Posterior vena cava (tissue), 2 donors: ENCODE measurements at regions of chr1 and their contacts with region 1.

Region 1: GRCh38 chr1:5424802-5425703 is 567.2 kb downstream of the NPHP4 start:
- DNase-seq: no peak

Region 2: GRCh38 chr1:5238351-5239130 is 186.5 kb before region 1 on chr1:
- intact Hi-C with region 1: no loop called
- DNase-seq: no peak

Region 3: GRCh38 chr1:5348732-5349465 is 76.2 kb before region 1 on chr1:
- intact Hi-C with region 1: no loop called
- DNase-seq: no peak

Region 4: GRCh38 chr1:5458248-5458647 is 33.2 kb after region 1 on chr1:
- intact Hi-C with region 1: loop called in 1 of 2 experiments (anchors 1 kb)
- DNase-seq: no peak